PC-3 (cell line): ENCODE measurements at regions of chr11 and their contacts with region 1.

Region 1: GRCh38 chr11:117205211-117205818 is 6.1 kb downstream of the TAGLN start:
- DNase-seq: no peak
- ATAC-seq: no peak
- H3K4me3 ChIP-seq: no peak overlapping the region
- H3K27ac ChIP-seq: no peak overlapping the region
- H3K4me1 ChIP-seq: no peaks in the 10 kb centered on the region
- H3K27me3 ChIP-seq: no peaks in the 10 kb centered on the region
- CTCF ChIP-seq: no peak

Region 2: DNA sequence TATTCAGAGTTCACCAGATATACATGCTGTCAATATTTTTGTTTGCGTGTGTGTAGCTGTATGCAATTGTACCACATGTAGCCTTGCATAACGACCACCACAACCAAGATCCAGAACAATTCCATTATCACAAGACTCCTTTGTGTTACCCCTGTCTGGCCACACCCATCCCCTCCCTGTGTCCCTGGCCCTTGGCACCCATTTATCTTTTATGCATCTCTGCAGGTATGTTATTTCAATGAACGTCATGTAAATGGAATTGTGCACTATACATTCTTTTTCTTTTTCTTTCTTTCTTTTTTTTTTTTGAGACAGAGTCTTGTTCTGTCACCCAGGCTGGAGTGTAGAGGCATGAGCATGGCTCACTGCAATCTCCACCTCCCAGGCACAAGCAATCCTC is 70.9 kb before region 1 on chr11:
- CTCF ChIA-PET with region 1: no interaction called
- POLR2A ChIA-PET with region 1: no interaction called
- intact Hi-C with region 1: loop called (anchors 5 kb)
- DNase-seq: no peak
- ATAC-seq: no peak
- H3K4me3 ChIP-seq: no peak overlapping the region
- H3K27ac ChIP-seq: no peak overlapping the region
- H3K4me1 ChIP-seq: no peaks in the 10 kb centered on the region
- H3K27me3 ChIP-seq: no peaks in the 10 kb centered on the region
- CTCF ChIP-seq: no peak